ENCODE measurements at regions of chr11 and their contacts with region 1.

Region 1: DNA sequence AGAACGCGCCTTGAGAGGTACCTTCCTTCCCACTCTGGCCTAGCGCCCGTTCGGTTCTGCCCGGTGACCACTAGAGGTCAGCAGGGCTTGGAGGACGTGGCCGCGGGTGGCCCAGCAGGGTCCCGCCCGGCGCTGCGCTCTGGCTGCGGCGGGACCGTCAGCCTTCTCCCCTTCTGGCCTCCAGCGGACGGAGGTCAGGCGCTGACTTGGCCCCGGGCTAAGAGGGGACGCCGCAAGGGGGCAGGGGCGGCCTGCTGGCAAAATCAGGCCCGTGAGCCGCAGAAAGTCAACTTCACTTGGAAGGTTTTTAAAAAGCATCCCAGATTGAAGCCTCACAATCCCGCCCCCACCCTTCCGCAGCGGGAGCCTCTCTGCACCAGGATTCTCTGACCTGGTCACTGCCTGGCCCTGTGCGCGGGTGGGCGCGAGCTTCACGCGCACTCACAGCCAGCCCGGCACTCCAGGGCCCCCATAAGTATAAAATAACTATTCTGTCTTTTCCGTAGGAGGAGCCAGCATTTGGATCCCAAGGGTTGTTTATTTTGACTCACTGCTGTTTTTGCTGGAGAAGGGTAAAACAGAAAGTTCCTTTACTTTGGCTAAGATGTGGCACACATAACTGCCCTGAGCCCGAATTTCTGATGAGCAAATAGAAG is 23.2 kb upstream of the ZBTB16 start:
- DNase-seq: peak; percentile 90
- H3K4me3 ChIP-seq: peak overlapping the region; percentile 19 to 66; a peak in 3 of 4 replicates
- H3K27ac ChIP-seq: no peak overlapping the region
- H3K4me1 ChIP-seq: peaks cover 3% of the 10 kb centered on the region in 2 experiments; a peak in 2 of 4 replicates
- H3K27me3 ChIP-seq: peaks cover 25% of the 10 kb centered on the region; the same call in 1 of the 2 replicates
- CTCF ChIP-seq: peak; percentile 82
- EP300 ChIP-seq: no peak
- RAD21 ChIP-seq: peak; percentile 85

Region 2: DNA sequence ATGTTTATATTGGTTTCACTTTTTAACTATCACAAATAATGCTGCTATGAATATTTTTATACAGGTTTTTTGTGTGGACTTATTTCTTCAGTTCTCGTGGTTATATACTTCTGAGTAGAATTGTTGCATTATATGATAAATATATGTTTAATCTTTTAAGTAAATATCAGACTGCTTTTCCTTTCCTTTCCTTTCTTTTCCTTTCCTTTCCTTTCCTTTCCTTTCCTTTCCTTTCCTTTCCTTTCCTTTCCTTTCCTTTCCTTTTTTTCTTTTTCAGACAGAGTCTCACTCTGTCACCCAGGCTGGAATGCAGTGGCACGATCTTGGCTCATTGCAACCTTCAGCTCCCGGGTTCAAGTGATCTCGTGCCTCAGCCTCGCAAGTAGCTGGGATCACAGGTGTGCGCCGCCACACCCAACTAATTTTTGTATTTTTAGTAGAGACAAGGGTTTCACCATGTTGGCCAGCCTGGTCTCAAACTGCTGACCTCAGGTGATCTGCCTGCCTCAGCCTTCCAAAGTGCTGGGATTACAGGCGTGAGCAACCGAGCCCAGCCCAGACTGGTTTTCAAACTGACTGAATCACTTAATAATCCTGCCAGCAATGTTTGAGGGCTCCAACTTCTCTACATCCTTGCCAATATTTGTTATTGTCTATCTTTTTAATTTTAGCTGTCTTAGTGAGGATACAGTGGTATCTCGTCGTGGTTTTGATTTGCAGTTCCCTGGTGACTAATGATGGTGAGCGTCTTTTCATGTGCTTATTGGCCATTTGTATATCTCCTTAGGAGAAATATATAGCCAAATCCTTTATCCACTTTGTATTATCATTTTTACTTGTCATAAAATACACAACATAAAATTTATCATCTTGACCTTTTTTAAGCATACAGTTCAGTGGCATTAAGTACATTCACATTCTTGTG is 109.7 kb before region 1 on chr11:
- CTCF ChIA-PET with region 1: no interaction called
- POLR2A ChIA-PET with region 1: no interaction called
- DNase-seq: no peak
- H3K4me3 ChIP-seq: no peak overlapping the region
- H3K27ac ChIP-seq: no peak overlapping the region
- H3K4me1 ChIP-seq: no peaks in the 10 kb centered on the region
- H3K27me3 ChIP-seq: no peaks in the 10 kb centered on the region; the same call in 1 of the 2 replicates
- CTCF ChIP-seq: no peak
- EP300 ChIP-seq: no peak
- RAD21 ChIP-seq: no peak

Region 3: DNA sequence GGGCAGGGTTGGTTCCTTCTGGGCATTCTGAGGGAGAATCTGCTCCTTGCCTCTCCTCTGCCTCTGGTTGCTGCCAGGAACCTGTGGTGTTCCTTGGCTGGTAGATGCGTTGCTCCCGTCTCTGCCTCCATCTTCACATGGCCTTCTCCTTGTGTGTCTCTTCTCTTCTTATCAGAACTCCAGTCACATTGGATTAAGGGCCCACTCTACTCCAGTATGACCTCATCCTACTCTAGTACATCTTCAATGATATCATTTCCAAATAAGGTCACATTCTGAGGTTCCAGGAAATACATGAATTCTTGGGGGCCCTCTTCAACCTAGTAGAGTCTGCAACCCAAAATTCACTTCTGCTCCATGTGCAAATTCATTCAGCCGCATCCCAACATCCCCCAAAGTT is 98.4 kb before region 1 on chr11:
- CTCF ChIA-PET with region 1: no interaction called
- POLR2A ChIA-PET with region 1: no interaction called
- DNase-seq: no peak
- H3K4me3 ChIP-seq: no peak overlapping the region
- H3K27ac ChIP-seq: no peak overlapping the region
- H3K4me1 ChIP-seq: no peaks in the 10 kb centered on the region
- H3K27me3 ChIP-seq: no peaks in the 10 kb centered on the region
- CTCF ChIP-seq: no peak
- EP300 ChIP-seq: no peak
- RAD21 ChIP-seq: no peak

Region 4: DNA sequence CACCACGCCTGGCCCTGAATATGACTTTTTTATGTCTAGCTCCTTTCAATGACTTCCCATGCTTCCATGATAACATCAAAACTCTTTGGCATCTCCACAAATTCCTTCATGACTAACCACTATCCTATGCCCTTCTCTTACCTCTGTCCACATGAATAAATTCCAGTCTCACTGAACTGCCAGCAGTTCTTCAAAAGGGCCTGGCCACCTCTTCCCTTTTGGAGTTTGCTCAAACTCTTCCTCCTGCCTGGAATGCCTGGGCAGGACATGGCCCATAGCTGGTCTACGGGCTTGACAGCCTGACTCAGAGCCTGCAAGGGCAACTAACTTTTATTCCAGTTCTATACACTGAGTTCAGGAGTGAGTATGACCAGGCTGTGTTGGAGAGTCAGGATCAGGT is 18.6 kb before region 1 on chr11:
- CTCF ChIA-PET with region 1: interaction called, 10 read pairs
- POLR2A ChIA-PET with region 1: no interaction called
- DNase-seq: no peak
- H3K4me3 ChIP-seq: no peak overlapping the region
- H3K27ac ChIP-seq: no peak overlapping the region
- H3K4me1 ChIP-seq: no peaks in the 10 kb centered on the region
- H3K27me3 ChIP-seq: no peaks in the 10 kb centered on the region
- CTCF ChIP-seq: no peak
- EP300 ChIP-seq: no peak
- RAD21 ChIP-seq: no peak

Region 5: DNA sequence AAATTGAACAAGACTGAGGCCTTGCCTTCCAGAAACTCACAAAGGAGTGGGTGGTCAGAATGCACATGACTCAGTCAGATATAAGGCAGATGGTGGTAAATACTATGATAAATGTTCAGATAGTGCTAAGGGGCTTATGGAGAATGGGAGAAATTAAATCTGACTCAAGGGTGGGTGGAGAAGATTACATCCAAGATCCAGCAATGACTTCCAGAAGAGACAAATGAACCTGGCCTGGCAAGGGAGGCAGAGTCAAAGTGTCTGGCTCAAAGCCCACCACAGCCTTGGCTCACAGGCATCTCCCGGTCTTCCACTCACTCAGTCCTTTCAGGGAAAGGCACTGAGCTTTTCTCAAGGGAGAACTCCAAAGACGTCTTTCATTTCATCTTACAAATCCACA is 17.1 kb after region 1 on chr11:
- CTCF ChIA-PET with region 1: interaction called, 18 read pairs
- POLR2A ChIA-PET with region 1: no interaction called
- DNase-seq: no peak
- H3K4me3 ChIP-seq: no peak overlapping the region
- H3K27ac ChIP-seq: no peak overlapping the region
- H3K4me1 ChIP-seq: peaks cover 0 to 5% of the 10 kb centered on the region in 2 experiments; a peak in 2 of 4 replicates
- H3K27me3 ChIP-seq: peaks cover 25% of the 10 kb centered on the region
- CTCF ChIP-seq: no peak
- EP300 ChIP-seq: no peak
- RAD21 ChIP-seq: no peak

Region 6: GRCh38 chr11:114066046-114066648 is 29.9 kb after region 1 on chr11:
- CTCF ChIA-PET with region 1: no interaction called
- POLR2A ChIA-PET with region 1: no interaction called
- DNase-seq: no peak
- H3K4me3 ChIP-seq: no peak overlapping the region
- H3K27ac ChIP-seq: no peak overlapping the region
- H3K4me1 ChIP-seq: peaks cover 0 to 2% of the 10 kb centered on the region in 2 experiments; a peak in 1 of 4 replicates
- H3K27me3 ChIP-seq: peaks cover 39% of the 10 kb centered on the region
- CTCF ChIP-seq: no peak
- EP300 ChIP-seq: no peak
- RAD21 ChIP-seq: no peak

Region 7: GRCh38 chr11:114166897-114167323 is 130.6 kb after region 1 on chr11:
- CTCF ChIA-PET with region 1: interaction called, 10 read pairs
- POLR2A ChIA-PET with region 1: no interaction called
- DNase-seq: no peak
- H3K4me3 ChIP-seq: no peak overlapping the region
- H3K27ac ChIP-seq: no peak overlapping the region
- H3K4me1 ChIP-seq: peaks cover 24 to 30% of the 10 kb centered on the region in 2 experiments
- H3K27me3 ChIP-seq: peaks cover 62% of the 10 kb centered on the region
- CTCF ChIP-seq: no peak
- EP300 ChIP-seq: peak in 1 of 2 experiments; percentile 27; a peak in 1 of 4 replicates
- RAD21 ChIP-seq: no peak

Region 8: GRCh38 chr11:114180301-114181055 is 144.2 kb after region 1 on chr11:
- CTCF ChIA-PET with region 1: interaction called, 84 read pairs
- POLR2A ChIA-PET with region 1: no interaction called
- DNase-seq: peak; percentile 61
- H3K4me3 ChIP-seq: no peak overlapping the region
- H3K27ac ChIP-seq: no peak overlapping the region
- H3K4me1 ChIP-seq: no peaks in the 10 kb centered on the region
- H3K27me3 ChIP-seq: peaks cover 6% of the 10 kb centered on the region; the same call in 1 of the 2 replicates
- CTCF ChIP-seq: peak; percentile 43
- EP300 ChIP-seq: no peak
- RAD21 ChIP-seq: peak; percentile 73